Mucosa of descending colon (tissue), 3 donors: ENCODE measurements at regions of chr2 and their contacts with region 1.

Region 1: GRCh38 chr2:55771612-55772011 is 78.0 kb upstream of the PNPT1 start:
- DNase-seq: no peak
- ATAC-seq: no peak
- H3K4me3 ChIP-seq: no peak overlapping the region
- H3K4me1 ChIP-seq: no peaks in the 10 kb centered on the region
- CTCF ChIP-seq: peak; percentile 22

Region 2: DNA sequence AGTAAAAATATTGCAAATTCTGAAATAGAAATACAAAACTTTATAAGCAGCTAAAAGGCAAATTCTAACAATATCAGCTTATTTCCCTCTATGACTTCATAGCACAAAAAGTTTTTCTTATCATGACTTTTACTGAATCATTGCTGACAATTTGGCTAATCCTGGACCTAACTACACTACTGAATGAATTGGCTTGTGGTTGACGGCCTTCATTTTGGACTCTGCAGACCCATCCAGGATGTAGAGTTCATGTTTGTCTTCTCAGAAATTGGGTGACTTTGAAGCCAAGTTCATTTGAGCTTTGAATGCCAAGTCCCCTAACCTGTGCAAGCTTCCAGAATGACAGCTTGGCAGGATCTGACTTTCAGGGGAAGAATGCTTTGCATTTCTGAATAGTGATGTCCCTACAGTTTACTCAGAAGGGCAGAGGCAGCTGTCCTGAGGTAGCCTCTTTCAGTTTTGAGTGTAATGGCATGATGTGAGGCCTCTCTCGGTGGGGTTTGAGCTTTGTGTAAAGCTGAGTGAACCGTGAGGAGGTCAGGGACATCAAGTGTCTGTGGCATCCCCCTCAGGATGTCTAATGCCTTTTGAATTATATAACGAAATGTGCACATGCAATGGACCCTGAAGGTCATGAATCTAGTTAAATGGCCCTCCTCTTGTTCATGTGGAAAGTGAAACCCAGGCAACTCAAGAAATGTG is 104.0 kb after region 1 on chr2:
- intact Hi-C with region 1: no loop called
- DNase-seq: no peak
- ATAC-seq: no peak
- H3K4me3 ChIP-seq: no peak overlapping the region
- H3K4me1 ChIP-seq: no peaks in the 10 kb centered on the region
- CTCF ChIP-seq: no peak

Region 3: GRCh38 chr2:55954306-55955035 is 182.9 kb after region 1 on chr2:
- intact Hi-C with region 1: loop called in 1 of 2 experiments (anchors 5 kb)
- DNase-seq: no peak
- ATAC-seq: no peak
- H3K4me3 ChIP-seq: no peak overlapping the region
- H3K4me1 ChIP-seq: no peaks in the 10 kb centered on the region
- CTCF ChIP-seq: no peak

Region 4: GRCh38 chr2:55961318-55961911 is 189.8 kb after region 1 on chr2:
- intact Hi-C with region 1: loop called (anchors 2 to 5 kb)
- DNase-seq: peak in 1 of 3 donors; percentile 43
- ATAC-seq: no peak
- H3K4me3 ChIP-seq: no peak overlapping the region
- H3K4me1 ChIP-seq: no peaks in the 10 kb centered on the region
- CTCF ChIP-seq: no peak